Naive thymus-derived CD4-positive, alpha-beta T cell (primary cell): ENCODE measurements at regions of chr22 and their contacts with region 1.

Region 1: DNA sequence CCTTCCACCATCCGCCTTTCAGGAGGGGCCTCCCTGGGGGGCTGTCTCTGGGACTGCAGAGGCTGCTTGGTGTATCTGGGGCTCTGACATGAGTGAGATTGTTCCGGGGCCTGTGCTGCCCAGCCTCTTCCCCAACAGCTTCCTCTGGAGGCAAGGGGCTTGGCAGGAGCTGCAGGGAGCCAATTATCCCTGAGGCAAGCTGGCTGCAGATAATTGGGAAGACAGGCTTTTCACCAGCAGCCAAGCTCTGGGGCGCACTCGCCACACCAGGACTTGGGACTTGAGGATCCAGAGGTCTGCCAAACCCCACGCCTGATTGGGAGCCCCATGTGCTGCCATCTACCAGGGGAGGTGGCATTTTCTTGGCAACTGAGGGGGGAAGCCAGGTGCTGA is 15.6 kb upstream of the RTN4R start:
- DNase-seq: no peak
- ATAC-seq: no peak
- H3K4me3 ChIP-seq: no peak overlapping the region
- H3K4me3 Mint-ChIP-seq: no peak overlapping the region
- H3K27ac ChIP-seq: no peak overlapping the region
- H3K27ac Mint-ChIP-seq: no peak overlapping the region
- H3K4me1 ChIP-seq: no peaks in the 10 kb centered on the region
- H3K4me1 Mint-ChIP-seq: no peaks in the 10 kb centered on the region
- H3K27me3 ChIP-seq: no peaks in the 10 kb centered on the region
- H3K27me3 Mint-ChIP-seq: no peaks in the 10 kb centered on the region

Region 2: DNA sequence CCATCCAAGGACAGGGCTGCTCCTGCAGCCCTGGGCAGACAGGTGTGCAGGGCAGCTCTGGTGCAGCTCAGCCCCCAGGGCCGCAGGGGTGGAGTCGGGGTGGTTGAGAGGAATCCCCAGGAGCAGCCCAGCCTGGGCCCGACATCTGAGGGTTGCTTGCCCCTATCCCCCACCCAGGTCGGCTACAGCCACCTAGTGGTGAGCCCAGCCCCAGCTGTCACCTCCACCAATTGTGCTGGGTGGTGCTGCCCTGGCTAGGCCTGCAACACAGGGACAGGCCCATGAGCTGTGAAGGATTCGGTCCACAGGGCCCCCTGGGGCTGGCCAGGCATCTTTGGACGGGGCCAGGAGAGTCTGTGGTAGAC is 45.2 kb before region 1 on chr22:
- CTCF ChIA-PET with region 1: no interaction called
- POLR2A ChIA-PET with region 1: no interaction called
- intact Hi-C with region 1: loop called in 1 of 2 experiments (anchors 1 kb)
- DNase-seq: peak in 7 of 9 donors; percentile 28 to 50 (median 38)
- ATAC-seq: peak; percentile 64
- H3K4me3 ChIP-seq: no peak overlapping the region
- H3K4me3 Mint-ChIP-seq: peak overlapping the region in 8 of 10 donors; percentile 29 to 54 (median 40)
- H3K27ac ChIP-seq: peak overlapping the region; percentile 49
- H3K27ac Mint-ChIP-seq: peak overlapping the region; percentile 36 to 87 (median 79)
- H3K4me1 ChIP-seq: peaks cover 31 to 59% of the 10 kb centered on the region in 2 donors
- H3K4me1 Mint-ChIP-seq: peaks cover 8 to 47% (median 14%) of the 10 kb centered on the region in 7 donors
- H3K27me3 ChIP-seq: no peaks in the 10 kb centered on the region
- H3K27me3 Mint-ChIP-seq: no peaks in the 10 kb centered on the region

Region 3: GRCh38 chr22:20268279-20269012 is 15.2 kb before region 1 on chr22 and contains the start of gene RTN4R:
- CTCF ChIA-PET with region 1: no interaction called
- POLR2A ChIA-PET with region 1: no interaction called
- intact Hi-C with region 1: loop called in 1 of 2 experiments (anchors 2 kb)
- DNase-seq: peak in 7 of 9 donors; percentile 41 to 73 (median 52)
- ATAC-seq: peak; percentile 84
- H3K4me3 ChIP-seq: no peak within 1 kb of the TSS
- H3K4me3 Mint-ChIP-seq: peak within 1 kb of the TSS; percentile 47 to 79 (median 74)
- H3K27ac ChIP-seq: peak within 1 kb of the TSS; percentile 8
- H3K27ac Mint-ChIP-seq: peak within 1 kb of the TSS in 1 of 9 donors; percentile 69
- H3K4me1 ChIP-seq: peaks cover 0 to 4% of the 10 kb centered on the region in 2 donors
- H3K4me1 Mint-ChIP-seq: peaks cover 0 to 7% (median 5%) of the 10 kb centered on the region in 7 donors
- H3K27me3 ChIP-seq: no peaks in the 10 kb centered on the region
- H3K27me3 Mint-ChIP-seq: peaks cover 0 to 6% (median 0%) of the 10 kb centered on the region in 5 donors
- total RNA-seq, gene RTN4R: 0.98 to 2.7 (median 1.8) TPM